Adrenal gland (tissue), 19 donors: ENCODE measurements at regions of chr5 and their contacts with region 1.

Region 1: GRCh38 chr5:170429014-170429413 is 39.8 kb upstream of the KCNMB1 start:
- DNase-seq: no peak
- H3K4me3 ChIP-seq: no peak overlapping the region
- H3K27ac ChIP-seq: no peak overlapping the region
- H3K4me1 ChIP-seq: no peaks in the 10 kb centered on the region
- H3K27me3 ChIP-seq: no peaks in the 10 kb centered on the region
- CTCF ChIP-seq: peak in 1 of 6 experiments; percentile 9
- POLR2A ChIP-seq: no peak

Region 2: DNA sequence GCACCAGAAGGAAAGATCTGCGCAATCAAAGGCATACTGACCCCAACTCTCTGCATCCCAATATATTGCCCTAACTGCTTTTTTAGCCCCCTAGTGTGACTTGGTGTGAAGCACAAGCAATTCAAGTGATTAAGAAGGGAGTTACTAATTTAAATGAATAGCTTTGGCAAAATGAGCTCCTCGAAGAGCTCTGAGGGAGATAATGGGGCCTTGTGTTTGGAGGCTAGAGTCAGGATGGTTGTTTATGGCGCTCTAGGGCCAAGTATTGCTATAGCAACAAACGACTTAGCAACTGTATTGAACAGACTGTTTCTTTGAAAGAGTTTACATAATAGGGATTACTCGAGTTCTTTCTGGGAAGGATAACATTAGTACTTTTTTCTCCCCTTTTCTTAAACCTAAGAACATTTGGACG is 207.7 kb before region 1 on chr5:
- intact Hi-C with region 1: loop called in 1 of 2 experiments (anchors 5 kb)
- DNase-seq: no peak
- H3K4me3 ChIP-seq: no peak overlapping the region
- H3K27ac ChIP-seq: peak overlapping the region in 1 of 5 donors; percentile 39
- H3K4me1 ChIP-seq: peaks cover 0 to 4% of the 10 kb centered on the region in 2 donors
- H3K27me3 ChIP-seq: no peaks in the 10 kb centered on the region
- CTCF ChIP-seq: no peak
- POLR2A ChIP-seq: no peak

Region 3: DNA sequence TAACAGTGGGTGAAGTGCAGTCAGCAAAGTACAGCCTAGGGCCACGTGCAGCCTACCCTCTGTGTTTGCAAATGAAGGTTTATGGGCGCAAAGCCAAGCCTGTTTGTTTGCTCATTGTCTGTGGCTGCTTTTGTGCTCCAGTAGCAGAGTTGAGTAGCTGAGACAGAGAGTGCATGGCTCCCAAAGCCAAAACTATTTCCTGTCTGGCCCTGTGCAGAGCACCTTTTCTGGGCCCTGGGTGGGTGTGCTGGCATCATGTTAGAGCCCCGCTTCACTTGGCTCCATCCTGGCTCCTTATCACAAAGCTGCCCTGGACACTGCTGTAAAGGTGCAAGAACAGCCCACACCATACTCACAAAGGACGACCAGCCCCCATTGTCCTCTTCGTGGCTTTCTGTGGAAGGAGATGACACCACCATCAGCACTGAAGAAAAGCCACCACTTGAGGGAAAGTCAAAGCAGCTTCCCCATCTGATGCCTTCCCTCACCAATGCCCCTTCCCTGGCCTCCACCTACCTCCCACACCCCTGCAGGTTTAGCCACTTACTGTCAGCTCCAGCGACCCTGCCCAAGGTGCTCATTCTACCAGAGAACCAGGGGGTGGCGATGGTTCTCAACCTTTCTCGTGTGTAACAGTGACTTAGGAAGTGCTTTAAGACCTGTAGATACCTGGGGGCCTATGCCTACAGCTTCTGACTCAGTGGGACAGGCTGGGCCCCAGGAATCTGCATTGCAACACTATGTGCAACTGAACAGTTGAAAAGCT is 154.9 kb before region 1 on chr5:
- intact Hi-C with region 1: no loop called
- DNase-seq: peak in 1 of 7 donors; percentile 29
- H3K4me3 ChIP-seq: no peak overlapping the region
- H3K27ac ChIP-seq: no peak overlapping the region
- H3K4me1 ChIP-seq: peaks cover 1 to 14% of the 10 kb centered on the region in 2 donors
- H3K27me3 ChIP-seq: no peaks in the 10 kb centered on the region
- CTCF ChIP-seq: no peak
- POLR2A ChIP-seq: no peak

Region 4: GRCh38 chr5:170747851-170748250 is 318.8 kb after region 1 on chr5:
- intact Hi-C with region 1: no loop called
- DNase-seq: peak in 2 of 7 donors; percentile 19 to 47
- H3K4me3 ChIP-seq: no peak overlapping the region
- H3K27ac ChIP-seq: no peak overlapping the region
- H3K4me1 ChIP-seq: peaks cover 5 to 7% of the 10 kb centered on the region in 2 donors
- H3K27me3 ChIP-seq: peaks cover 9% of the 10 kb centered on the region
- CTCF ChIP-seq: peak in 3 of 6 experiments; percentile 3 to 27 (median 17)
- POLR2A ChIP-seq: no peak